CD4-positive, alpha-beta memory T cell (primary cell): ENCODE measurements at regions of chr12 and their contacts with region 1.

Region 1: DNA sequence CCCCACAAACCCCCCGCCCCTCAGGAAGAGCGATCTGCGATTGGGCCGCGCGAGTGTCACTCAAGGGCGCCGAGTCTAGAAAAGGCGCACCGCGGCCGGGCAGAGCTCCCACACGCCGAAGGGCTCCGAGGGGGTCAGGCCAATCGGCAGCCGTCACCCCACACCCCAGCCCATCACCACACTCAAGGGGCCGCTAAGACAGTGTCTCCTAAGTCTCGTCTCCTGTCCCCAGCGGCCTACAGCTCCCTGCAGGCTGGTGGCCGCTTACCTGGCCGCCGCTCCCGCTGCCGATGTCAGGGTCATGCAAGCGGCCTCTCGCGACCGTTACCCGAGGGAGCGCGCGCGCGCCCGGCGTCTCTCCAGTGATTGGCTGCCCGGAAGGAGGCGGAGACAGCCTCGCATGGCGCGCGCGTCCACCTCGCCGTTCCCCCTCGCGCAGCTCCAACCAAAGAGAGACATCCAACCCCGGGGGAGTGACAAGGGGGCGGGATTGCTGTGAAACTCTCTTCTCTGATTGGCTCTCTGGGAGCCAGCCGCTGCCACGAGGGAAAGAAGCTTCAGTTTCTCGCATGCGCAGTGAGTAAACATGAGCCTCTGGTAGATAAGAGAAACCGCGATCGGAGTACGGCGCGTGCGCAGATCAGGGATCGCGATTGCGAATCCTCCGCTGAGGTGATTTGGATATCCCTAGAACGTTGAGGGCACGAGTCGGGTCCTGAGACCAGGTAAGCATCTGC is at the starts of genes MPHOSPH9 and MTRFR:
- DNase-seq: peak; percentile 99 to 100 (median 100)
- H3K4me3 ChIP-seq: peak within 1 kb of the TSS; percentile 82 to 99
- H3K4me3 Mint-ChIP-seq: peak within 1 kb of the TSS; percentile 96 to 100 (median 99)
- H3K27ac ChIP-seq: peak within 1 kb of the TSS; percentile 88
- H3K27ac Mint-ChIP-seq: peak within 1 kb of the TSS; percentile 96 to 100 (median 99)
- H3K4me1 ChIP-seq: peaks cover 86% of the 10 kb centered on the region
- H3K4me1 Mint-ChIP-seq: peaks cover 40 to 81% (median 60%) of the 10 kb centered on the region in 4 donors
- H3K27me3 ChIP-seq: no peaks in the 10 kb centered on the region
- H3K27me3 Mint-ChIP-seq: no peaks in the 10 kb centered on the region
- total RNA-seq, gene MPHOSPH9: 57.9 to 62.7 TPM
- total RNA-seq, gene MTRFR: 46.1 to 48.8 TPM

Region 2: DNA sequence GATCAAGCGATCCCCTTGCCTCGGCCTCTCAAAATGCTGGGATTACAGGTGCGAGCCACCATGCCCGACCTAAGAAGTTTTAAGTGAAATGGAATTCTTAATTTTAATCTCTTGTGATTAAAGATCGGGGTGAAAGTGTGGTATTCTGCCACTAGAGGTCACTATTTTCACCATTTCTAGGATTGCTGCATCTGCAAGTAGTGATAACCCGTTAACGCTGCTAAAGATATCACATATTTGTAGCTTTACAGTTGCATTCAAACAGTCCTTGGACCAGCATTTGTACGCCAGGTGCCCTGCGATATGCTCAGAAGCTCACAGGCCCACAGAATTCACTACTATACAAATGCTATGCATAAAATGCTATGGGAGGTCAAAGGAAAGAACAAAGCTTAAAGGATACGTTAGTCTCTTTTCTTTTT is 439.3 kb before region 1 on chr12:
- CTCF ChIA-PET with region 1: interaction called, 5 read pairs
- POLR2A ChIA-PET with region 1: no interaction called
- intact Hi-C with region 1: loop called (anchors 5 kb)
- DNase-seq: peak in 4 of 5 donors; percentile 55 to 60 (median 58)
- H3K4me3 ChIP-seq: no peak overlapping the region
- H3K4me3 Mint-ChIP-seq: peak overlapping the region in 1 of 8 donors; percentile 29
- H3K27ac ChIP-seq: no peak overlapping the region
- H3K27ac Mint-ChIP-seq: no peak overlapping the region
- H3K4me1 ChIP-seq: peaks cover 3% of the 10 kb centered on the region
- H3K4me1 Mint-ChIP-seq: peaks cover 0 to 5% (median 4%) of the 10 kb centered on the region in 4 donors
- H3K27me3 ChIP-seq: no peaks in the 10 kb centered on the region
- H3K27me3 Mint-ChIP-seq: no peaks in the 10 kb centered on the region

Region 3: DNA sequence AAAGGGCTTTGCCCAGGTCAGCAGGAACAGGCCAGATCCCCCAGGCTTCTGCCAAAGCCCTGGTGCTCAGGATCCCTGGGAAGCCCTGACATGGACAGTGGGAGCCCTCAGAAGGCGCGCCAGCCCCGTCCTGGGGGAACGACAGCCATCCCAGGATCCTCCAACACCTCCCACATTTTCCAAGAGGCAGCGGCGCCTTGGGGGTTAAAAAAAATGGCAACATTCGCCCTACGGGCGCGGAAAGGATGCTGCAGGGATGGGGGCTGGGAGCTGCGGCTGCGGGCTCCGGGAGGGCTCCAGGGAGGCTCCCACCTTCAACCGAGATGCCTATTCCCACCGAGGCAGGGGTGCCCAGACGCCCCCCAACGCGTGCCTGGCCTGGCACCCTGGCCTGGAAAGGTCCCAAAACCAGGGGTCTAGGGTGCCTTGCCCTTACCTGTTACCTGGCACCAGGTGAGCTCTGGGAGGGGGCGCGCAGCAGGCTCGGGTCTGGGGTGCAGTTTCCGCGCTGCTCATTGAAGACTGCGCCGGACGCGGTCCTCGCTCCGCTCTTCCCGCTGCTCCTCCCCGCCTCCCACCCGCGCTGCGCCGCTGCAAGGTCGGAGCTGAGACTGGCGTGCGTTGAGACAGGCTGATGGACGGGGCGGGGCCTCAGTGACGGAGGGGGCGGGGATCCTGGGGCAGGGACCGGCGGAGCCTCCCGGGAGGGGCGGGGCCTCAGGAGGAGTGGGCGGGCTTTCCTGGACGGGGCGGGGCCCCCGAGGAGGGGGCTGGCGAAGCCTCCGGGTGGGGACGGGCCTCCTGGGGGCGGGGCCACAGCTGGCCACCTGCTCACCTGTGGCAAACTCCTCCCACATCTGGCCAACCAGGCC is 266.9 kb before region 1 on chr12 and contains the start of gene ABCB9:
- CTCF ChIA-PET with region 1: interaction called, 13 read pairs
- POLR2A ChIA-PET with region 1: interaction called, 18 read pairs
- intact Hi-C with region 1: no loop called
- DNase-seq: peak; percentile 84 to 95 (median 87)
- H3K4me3 ChIP-seq: peak within 1 kb of the TSS in 1 of 2 donors; percentile 70
- H3K4me3 Mint-ChIP-seq: peak within 1 kb of the TSS; percentile 70 to 84 (median 76)
- H3K27ac ChIP-seq: peak within 1 kb of the TSS; percentile 56
- H3K27ac Mint-ChIP-seq: peak within 1 kb of the TSS in 6 of 7 donors; percentile 33 to 86 (median 60)
- H3K4me1 ChIP-seq: peaks cover 11% of the 10 kb centered on the region
- H3K4me1 Mint-ChIP-seq: peaks cover 5 to 11% (median 8%) of the 10 kb centered on the region in 4 donors
- H3K27me3 ChIP-seq: no peaks in the 10 kb centered on the region
- H3K27me3 Mint-ChIP-seq: no peaks in the 10 kb centered on the region
- total RNA-seq, gene ABCB9: 5.9 to 7.1 TPM

Region 4: GRCh38 chr12:123075646-123076171 is 157.3 kb before region 1 on chr12:
- CTCF ChIA-PET with region 1: interaction called, 17 read pairs
- POLR2A ChIA-PET with region 1: interaction called, 34 read pairs
- intact Hi-C with region 1: loop called (anchors 2 kb)
- DNase-seq: peak; percentile 76 to 86 (median 80)
- H3K4me3 ChIP-seq: peak overlapping the region; percentile 3 to 53
- H3K4me3 Mint-ChIP-seq: peak overlapping the region; percentile 85 to 93 (median 90)
- H3K27ac ChIP-seq: peak overlapping the region; percentile 60
- H3K27ac Mint-ChIP-seq: peak overlapping the region; percentile 89 to 98 (median 97)
- H3K4me1 ChIP-seq: peaks cover 42% of the 10 kb centered on the region
- H3K4me1 Mint-ChIP-seq: peaks cover 37 to 46% (median 40%) of the 10 kb centered on the region in 4 donors
- H3K27me3 ChIP-seq: no peaks in the 10 kb centered on the region
- H3K27me3 Mint-ChIP-seq: no peaks in the 10 kb centered on the region

Region 5: GRCh38 chr12:123250484-123251383 is 17.8 kb after region 1 on chr12:
- CTCF ChIA-PET with region 1: interaction called, 19 read pairs
- POLR2A ChIA-PET with region 1: interaction called, 14 read pairs
- intact Hi-C with region 1: no loop called
- DNase-seq: no peak
- H3K4me3 ChIP-seq: no peak overlapping the region
- H3K4me3 Mint-ChIP-seq: peak overlapping the region in 3 of 8 donors; percentile 30 to 38 (median 33)
- H3K27ac ChIP-seq: no peak overlapping the region
- H3K27ac Mint-ChIP-seq: peak overlapping the region in 6 of 7 donors; percentile 39 to 79 (median 54)
- H3K4me1 ChIP-seq: peaks cover 31% of the 10 kb centered on the region
- H3K4me1 Mint-ChIP-seq: peaks cover 27 to 58% (median 43%) of the 10 kb centered on the region in 4 donors
- H3K27me3 ChIP-seq: no peaks in the 10 kb centered on the region
- H3K27me3 Mint-ChIP-seq: no peaks in the 10 kb centered on the region

Region 6: DNA sequence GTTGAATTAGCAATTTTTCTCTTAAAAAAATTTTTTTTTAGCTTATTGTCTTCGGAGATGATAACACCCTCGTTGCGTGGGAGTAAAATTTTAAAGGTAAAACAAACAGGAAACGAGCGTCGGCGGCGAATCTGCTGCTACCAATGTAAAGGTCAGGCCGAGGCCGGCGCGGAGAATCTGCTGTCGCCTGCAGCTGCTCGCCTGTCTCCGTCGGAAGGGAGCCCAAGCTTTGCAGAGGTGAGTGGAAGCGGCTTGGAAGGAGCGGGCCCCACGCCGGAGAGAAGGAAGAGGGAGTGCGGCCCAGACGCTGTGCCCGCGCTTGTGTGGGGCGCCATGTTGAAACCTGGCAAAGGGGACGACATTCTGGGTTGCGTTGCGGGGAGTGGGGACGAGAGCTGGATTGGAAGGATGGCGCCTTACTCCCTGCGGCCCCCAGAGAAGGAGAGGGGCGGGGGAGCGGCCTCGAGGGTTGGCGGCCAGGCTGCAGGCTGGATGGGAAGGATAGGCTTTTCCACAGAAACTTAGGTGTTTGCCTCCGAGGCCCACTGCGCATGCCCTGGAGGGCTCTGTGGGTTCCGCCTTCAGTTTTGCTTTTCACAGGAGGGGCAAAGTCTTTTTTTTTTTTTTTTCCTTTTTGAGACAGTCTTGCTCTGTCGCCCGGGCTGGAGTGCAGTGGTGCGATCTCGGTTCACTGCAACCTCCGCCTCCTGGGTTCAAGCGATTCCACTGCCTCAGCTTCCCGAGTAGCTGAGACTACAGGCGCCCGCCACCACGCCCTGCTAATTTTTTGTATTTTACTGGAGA is 225.2 kb after region 1 on chr12 and contains the start of gene SNRNP35:
- CTCF ChIA-PET with region 1: no interaction called
- POLR2A ChIA-PET with region 1: interaction called, 19 read pairs
- intact Hi-C with region 1: no loop called
- DNase-seq: peak; percentile 87 to 91 (median 89)
- H3K4me3 ChIP-seq: peak within 1 kb of the TSS; percentile 58 to 95
- H3K4me3 Mint-ChIP-seq: peak within 1 kb of the TSS; percentile 97 to 100 (median 100)
- H3K27ac ChIP-seq: peak within 1 kb of the TSS; percentile 95
- H3K27ac Mint-ChIP-seq: peak within 1 kb of the TSS; percentile 98 to 100 (median 100)
- H3K4me1 ChIP-seq: peaks cover 26% of the 10 kb centered on the region
- H3K4me1 Mint-ChIP-seq: peaks cover 19 to 37% (median 29%) of the 10 kb centered on the region in 4 donors
- H3K27me3 ChIP-seq: no peaks in the 10 kb centered on the region
- H3K27me3 Mint-ChIP-seq: no peaks in the 10 kb centered on the region
- total RNA-seq, gene SNRNP35: 44.0 to 49.5 TPM